ENCODE measurements at regions of chr7 and their contacts with region 1.

Region 1: GRCh38 chr7:149624419-149625339 is 127.1 kb upstream of the ZNF746 start:
- DNase-seq: peak; percentile 99
- H3K4me3 ChIP-seq: peak overlapping the region; percentile 73 to 92 (median 87)
- H3K27ac ChIP-seq: peak overlapping the region; percentile 80 to 93 (median 90)
- H3K4me1 ChIP-seq: peaks cover 20 to 53% (median 42%) of the 10 kb centered on the region in 6 donors
- H3K27me3 ChIP-seq: no peaks in the 10 kb centered on the region
- CTCF ChIP-seq: peak; percentile 73 to 100 (median 99)
- POLR2A ChIP-seq: peak; percentile 14 to 61 (median 32)

Region 2: DNA sequence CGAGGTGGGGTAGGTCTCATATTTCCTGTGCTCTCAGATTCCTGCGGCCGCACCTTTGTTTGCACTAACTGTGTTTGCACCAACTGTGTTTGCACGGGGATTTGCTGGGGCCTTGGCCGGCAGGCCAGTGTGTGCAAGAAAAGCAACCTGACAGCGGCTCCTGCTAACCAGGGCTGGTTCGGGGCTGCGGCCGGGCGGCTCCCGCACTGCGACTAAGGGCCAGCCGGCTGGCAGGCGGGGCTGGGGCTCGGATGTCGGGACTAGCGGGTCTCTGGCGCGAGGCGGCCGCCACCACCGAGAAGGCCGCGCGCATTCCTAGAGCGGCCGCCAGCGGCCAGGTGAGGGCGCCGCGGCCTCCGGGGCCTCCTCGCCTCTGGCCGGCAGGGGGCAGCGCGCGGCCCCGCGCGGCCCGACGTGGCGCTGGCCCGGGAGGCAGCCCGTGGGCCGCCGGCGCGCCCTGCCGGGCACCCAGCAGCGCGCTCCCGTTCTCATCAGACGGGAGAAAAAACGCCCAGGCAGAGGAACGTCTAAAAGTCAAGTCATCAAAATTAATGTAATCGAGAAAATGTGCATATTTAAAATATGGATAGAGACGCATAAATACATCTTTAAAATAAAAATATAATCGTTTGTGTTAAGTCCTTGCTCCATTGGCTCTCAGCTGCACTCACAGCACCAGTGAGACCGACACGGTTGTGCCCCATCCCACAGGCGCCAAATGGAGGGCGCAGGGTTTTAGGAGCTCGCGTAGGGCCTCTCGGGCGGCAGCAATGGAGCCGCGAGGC is 202.4 kb before region 1 on chr7:
- intact Hi-C with region 1: loop called (anchors 10 kb)
- DNase-seq: peak; percentile 96
- H3K4me3 ChIP-seq: peak overlapping the region; percentile 17 to 73 (median 55)
- H3K27ac ChIP-seq: peak overlapping the region; percentile 64 to 90 (median 84)
- H3K4me1 ChIP-seq: peaks cover 5 to 23% (median 18%) of the 10 kb centered on the region in 6 donors
- H3K27me3 ChIP-seq: peaks cover 0 to 6% (median 0%) of the 10 kb centered on the region in 7 donors
- CTCF ChIP-seq: peak in 10 of 11 experiments; percentile 40 to 87 (median 68)
- POLR2A ChIP-seq: no peak

Region 3: DNA sequence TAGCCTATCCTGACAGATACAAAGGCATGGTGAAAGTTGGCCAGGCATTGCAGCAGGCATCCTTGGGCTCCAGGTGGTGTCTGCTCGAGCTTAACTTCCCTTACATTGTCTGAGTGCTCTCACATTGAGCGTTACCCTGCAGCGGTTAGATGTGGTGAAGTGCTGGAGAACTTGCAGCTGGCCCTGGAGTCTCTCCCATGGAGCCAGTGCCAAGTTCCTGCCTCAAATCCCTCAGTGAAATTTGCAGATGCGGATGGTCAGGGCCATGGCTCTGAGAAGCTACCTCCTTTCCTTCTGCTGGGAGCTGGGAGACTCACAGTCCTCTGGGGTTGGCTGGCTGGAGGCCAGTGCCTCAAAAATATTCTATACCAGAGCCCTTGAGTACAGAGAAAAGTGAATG is 123.8 kb before region 1 on chr7:
- intact Hi-C with region 1: loop called (anchors 10 kb)
- DNase-seq: no peak
- H3K4me3 ChIP-seq: no peak overlapping the region
- H3K27ac ChIP-seq: no peak overlapping the region
- H3K4me1 ChIP-seq: peaks cover 3 to 31% (median 16%) of the 10 kb centered on the region in 6 donors
- H3K27me3 ChIP-seq: no peaks in the 10 kb centered on the region
- CTCF ChIP-seq: no peak
- POLR2A ChIP-seq: no peak

Region 4: DNA sequence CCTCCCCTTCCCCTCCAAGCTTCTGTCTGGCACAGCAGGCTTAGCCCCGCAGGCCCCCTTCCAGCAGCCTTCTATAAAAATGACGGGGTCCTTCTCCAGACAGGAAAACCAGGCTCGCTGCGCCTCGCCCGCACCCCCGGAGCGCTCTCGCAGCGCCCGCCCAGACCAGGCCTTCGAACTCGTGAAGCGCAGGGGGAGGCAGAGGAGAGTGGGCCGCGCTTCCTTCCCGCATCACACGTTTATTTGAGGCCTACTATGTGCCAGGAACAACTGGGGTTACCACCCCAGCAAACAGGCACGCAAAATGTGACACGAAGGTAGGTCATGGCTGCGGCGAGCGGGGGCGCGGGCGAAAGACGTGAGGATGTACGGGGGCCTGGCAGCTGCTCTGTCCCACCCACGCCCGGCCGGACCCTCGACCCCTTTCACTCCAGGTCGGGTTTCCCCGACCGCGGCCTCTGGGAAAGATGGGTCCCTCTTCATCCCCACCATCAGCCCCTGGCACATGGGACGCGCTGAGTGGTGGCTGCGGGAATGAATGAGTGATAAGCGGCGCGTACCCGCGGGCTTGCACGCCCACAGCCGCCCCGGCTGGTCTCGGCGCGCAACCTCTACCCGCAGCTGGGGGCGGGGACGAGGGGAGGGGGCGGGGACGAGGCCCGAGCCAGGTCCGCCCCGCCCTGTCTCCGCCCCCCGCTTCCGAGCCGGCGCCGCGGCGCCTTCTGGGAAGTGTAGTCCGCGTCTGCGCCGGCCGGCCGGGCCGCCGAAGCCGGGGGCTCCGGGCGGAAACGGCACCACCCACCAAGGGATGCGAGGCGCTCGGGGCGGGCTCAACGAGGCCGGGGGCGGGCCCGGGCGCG is 89.6 kb after region 1 on chr7:
- intact Hi-C with region 1: no loop called
- DNase-seq: peak; percentile 98
- H3K4me3 ChIP-seq: peak overlapping the region; percentile 59 to 92 (median 65)
- H3K27ac ChIP-seq: peak overlapping the region in 6 of 8 donors; percentile 21 to 81 (median 72)
- H3K4me1 ChIP-seq: peaks cover 7 to 33% (median 22%) of the 10 kb centered on the region in 6 donors
- H3K27me3 ChIP-seq: no peaks in the 10 kb centered on the region
- CTCF ChIP-seq: peak in 1 of 11 experiments; percentile 17
- POLR2A ChIP-seq: no peak

Region 5: GRCh38 chr7:149826872-149827714 is 202.4 kb after region 1 on chr7:
- intact Hi-C with region 1: no loop called
- DNase-seq: no peak
- H3K4me3 ChIP-seq: no peak overlapping the region
- H3K27ac ChIP-seq: no peak overlapping the region
- H3K4me1 ChIP-seq: no peaks in the 10 kb centered on the region
- H3K27me3 ChIP-seq: peaks cover 0 to 18% (median 0%) of the 10 kb centered on the region in 7 donors
- CTCF ChIP-seq: no peak
- POLR2A ChIP-seq: no peak

Measured in spleen (tissue), 13 donors.